ENCODE measurements at regions of chr7 and their contacts with region 1.

Region 1: DNA sequence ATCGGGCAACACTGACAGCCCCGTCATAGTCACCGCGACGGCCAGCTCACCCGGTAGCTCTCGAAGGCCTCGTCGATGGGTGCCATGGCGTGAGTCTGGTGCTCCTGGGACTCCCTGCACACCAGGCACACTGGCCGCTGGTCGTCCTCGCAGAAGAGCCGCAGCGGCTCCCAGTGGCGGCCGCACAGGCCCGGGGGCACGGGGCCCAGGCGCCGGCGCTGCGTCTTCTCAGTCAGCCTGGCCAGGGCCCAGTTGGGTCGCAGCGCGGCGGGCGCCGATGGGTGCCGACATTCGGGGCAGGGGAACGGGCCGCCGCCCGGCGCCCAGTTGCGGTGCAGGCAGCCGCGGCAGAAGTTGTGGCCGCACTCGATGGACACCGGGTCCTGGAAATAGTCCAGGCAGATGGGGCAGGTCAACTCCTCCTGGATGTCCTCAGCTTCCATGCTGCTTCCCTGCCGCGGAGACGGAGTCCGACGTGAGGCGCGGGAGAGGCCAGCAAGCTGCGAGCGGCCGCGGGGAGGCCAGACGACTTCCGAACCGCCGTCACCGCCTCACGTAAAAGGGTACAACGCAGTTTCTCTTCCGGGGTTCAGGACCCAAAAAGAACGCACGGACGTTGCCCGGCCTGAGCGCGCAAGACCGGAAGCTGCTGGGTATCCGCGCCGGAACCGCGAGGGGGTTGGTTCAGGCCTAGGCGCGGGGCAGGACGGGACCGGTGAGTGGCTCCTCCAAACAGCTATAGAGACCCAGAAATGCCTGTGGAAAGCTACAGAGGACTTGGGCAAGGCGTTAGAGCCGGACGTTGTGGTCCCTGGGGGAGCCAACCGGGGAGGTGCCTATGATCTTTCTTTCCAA is at the start of gene TRIM4:
- DNase-seq: peak; percentile 96
- ATAC-seq: peak; percentile 99
- H3K4me3 Mint-ChIP-seq: peak within 1 kb of the TSS; percentile 92
- H3K27ac Mint-ChIP-seq: peak within 1 kb of the TSS; percentile 95
- H3K4me1 Mint-ChIP-seq: peaks cover 33% of the 10 kb centered on the region
- H3K27me3 Mint-ChIP-seq: no peaks in the 10 kb centered on the region
- total RNA-seq, gene TRIM4: 23.9 to 25.7 TPM

Region 2: DNA sequence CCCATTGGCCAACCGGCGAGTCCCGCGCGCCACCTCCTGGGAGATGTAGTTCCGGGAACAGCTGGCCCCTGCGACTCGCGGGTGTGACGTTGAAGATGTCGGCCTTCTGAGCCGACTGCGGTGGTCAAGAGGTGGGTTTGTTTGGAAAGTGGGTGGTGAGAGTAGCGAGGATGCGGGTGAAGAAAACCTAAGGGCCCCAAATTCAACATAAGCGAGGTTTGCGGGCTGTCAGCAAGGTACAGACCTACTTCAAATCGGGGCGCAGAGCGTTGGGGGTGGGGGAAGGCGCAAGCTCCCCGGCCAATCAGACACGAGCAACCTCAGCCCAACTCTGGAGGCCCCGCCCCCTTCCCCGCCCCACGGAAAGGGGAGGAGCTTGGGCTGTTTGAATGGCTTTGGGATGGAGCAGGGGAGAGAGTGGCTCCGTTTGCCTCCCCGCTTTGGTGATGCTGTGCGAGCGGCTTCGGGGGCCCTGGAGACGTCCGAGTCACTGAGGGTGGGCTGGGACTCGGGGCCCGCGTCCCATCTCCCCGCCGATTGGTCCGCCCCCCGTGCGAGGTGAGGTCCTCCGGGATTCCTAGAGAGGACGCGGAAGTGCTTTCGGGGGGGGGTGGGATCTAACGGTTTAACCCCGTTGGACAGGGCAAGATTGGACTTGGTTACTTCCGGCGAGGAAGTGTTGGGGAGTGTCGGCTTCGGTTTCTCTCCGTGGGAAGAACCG is 414.4 kb before region 1 on chr7 and contains the start of gene ZKSCAN5:
- CTCF ChIA-PET with region 1: interaction called, 5 read pairs
- POLR2A ChIA-PET with region 1: no interaction called
- intact Hi-C with region 1: loop called in 1 of 2 experiments (anchors 1 kb)
- DNase-seq: peak; percentile 99
- ATAC-seq: peak; percentile 87
- H3K4me3 Mint-ChIP-seq: peak within 1 kb of the TSS; percentile 87
- H3K27ac Mint-ChIP-seq: peak within 1 kb of the TSS; percentile 97
- H3K4me1 Mint-ChIP-seq: peaks cover 25% of the 10 kb centered on the region
- H3K27me3 Mint-ChIP-seq: no peaks in the 10 kb centered on the region
- total RNA-seq, gene ZKSCAN5: 10.1 to 12.1 TPM

Region 3: DNA sequence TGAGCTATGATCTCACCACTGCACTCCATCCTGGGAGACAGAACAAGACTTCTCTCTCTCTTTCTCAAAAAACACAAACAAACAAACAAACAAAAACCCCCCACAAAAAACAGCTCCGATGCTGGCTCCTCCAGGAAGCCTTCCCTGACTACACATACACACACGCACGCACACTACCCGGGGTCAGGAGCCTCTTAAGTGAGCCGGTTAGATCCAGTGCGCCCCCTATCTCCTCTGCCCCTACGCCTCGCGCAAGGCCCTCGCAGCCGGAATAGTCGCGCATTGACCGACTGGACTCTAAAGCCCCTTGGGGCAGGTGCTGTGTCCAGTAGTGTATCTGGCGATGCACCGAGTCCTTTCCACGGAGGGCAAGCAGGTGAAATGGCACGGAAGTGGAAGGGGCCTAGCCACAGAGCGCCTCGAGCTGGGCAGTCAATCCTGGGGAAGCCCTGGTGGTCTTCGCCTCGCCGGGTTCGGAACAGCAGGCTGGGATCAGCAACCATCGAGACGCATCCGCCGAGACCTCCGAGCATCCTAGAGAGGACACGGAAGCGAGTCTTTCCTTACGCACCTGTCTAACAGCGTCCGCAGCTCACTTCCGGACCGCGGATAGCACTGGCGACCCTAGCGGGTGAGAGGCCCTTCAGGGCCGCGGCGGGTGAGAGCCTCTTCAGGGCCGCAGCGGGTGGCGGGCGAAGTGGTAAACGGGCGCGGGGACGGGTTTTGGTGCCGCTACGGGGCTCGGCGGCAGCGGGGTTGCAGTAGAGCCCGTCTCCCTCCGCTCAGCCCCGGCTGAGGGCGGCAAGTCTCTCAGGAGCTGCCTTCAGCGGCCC is 302.6 kb before region 1 on chr7 and contains the start of gene ZSCAN25:
- CTCF ChIA-PET with region 1: no interaction called
- POLR2A ChIA-PET with region 1: no interaction called
- intact Hi-C with region 1: loop called in 1 of 2 experiments (anchors 1 kb)
- DNase-seq: peak; percentile 92
- ATAC-seq: peak; percentile 93
- H3K4me3 Mint-ChIP-seq: peak within 1 kb of the TSS; percentile 92
- H3K27ac Mint-ChIP-seq: peak within 1 kb of the TSS; percentile 96
- H3K4me1 Mint-ChIP-seq: peaks cover 44% of the 10 kb centered on the region
- H3K27me3 Mint-ChIP-seq: no peaks in the 10 kb centered on the region
- total RNA-seq, gene ZSCAN25: 20.5 to 25.2 TPM

Region 4: GRCh38 chr7:99827040-99827778 is 92.0 kb before region 1 on chr7:
- CTCF ChIA-PET with region 1: no interaction called
- POLR2A ChIA-PET with region 1: no interaction called
- intact Hi-C with region 1: no loop called
- DNase-seq: no peak
- ATAC-seq: no peak
- H3K4me3 Mint-ChIP-seq: no peak overlapping the region
- H3K27ac Mint-ChIP-seq: no peak overlapping the region
- H3K4me1 Mint-ChIP-seq: no peaks in the 10 kb centered on the region
- H3K27me3 Mint-ChIP-seq: peaks cover 3% of the 10 kb centered on the region

Region 5: DNA sequence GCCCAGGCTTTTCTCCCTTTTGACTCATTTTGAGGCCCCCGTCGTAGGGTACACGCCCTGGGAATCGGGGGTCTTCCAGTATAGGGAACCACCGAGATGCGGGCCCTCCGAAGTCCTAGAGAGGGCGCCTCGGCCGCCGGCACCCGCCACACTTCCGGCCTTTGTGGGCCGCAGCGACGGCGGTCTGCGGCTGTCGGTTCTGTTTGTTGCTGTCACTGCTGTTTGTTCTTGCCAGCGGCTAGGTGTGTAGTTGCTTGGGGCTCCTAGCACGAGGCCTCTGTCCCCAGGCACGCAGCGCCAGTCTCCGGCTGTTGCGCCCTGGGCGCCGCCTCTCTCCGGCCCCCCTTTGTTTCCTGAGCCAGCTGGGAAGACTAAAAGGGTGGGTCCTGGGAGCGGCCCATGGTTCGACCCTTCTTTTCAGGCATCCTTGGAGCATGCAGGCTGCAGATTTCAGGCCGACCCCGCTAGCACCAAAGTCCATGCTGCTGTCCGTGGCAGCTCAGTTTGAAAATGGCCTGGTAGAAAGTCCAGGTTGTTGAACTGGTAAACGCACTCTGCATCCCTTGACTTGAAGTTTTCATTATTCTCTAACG is 78.5 kb after region 1 on chr7:
- CTCF ChIA-PET with region 1: interaction called, 50 read pairs
- POLR2A ChIA-PET with region 1: interaction called, 4 read pairs
- intact Hi-C with region 1: no loop called
- DNase-seq: peak; percentile 81
- ATAC-seq: peak; percentile 87
- H3K4me3 Mint-ChIP-seq: peak overlapping the region; percentile 67
- H3K27ac Mint-ChIP-seq: peak overlapping the region; percentile 89
- H3K4me1 Mint-ChIP-seq: peaks cover 15% of the 10 kb centered on the region
- H3K27me3 Mint-ChIP-seq: peaks cover 1% of the 10 kb centered on the region

Region 6: GRCh38 chr7:100088621-100089457 is 169.7 kb after region 1 on chr7 and contains the start of gene COPS6:
- CTCF ChIA-PET with region 1: no interaction called
- POLR2A ChIA-PET with region 1: no interaction called
- intact Hi-C with region 1: loop called (anchors 2 to 10 kb)
- DNase-seq: peak; percentile 92
- ATAC-seq: peak; percentile 67
- H3K4me3 Mint-ChIP-seq: peak within 1 kb of the TSS; percentile 89
- H3K27ac Mint-ChIP-seq: peak within 1 kb of the TSS; percentile 96
- H3K4me1 Mint-ChIP-seq: peaks cover 25% of the 10 kb centered on the region
- H3K27me3 Mint-ChIP-seq: no peaks in the 10 kb centered on the region
- total RNA-seq, gene COPS6: 88.6 to 89.0 TPM

Region 7: GRCh38 chr7:100132697-100133151 is 213.5 kb after region 1 on chr7:
- CTCF ChIA-PET with region 1: interaction called, 11 read pairs
- POLR2A ChIA-PET with region 1: no interaction called
- intact Hi-C with region 1: loop called (anchors 1 to 5 kb)
- DNase-seq: peak; percentile 82
- ATAC-seq: peak; percentile 81
- H3K4me3 Mint-ChIP-seq: no peak overlapping the region
- H3K27ac Mint-ChIP-seq: no peak overlapping the region
- H3K4me1 Mint-ChIP-seq: peaks cover 10% of the 10 kb centered on the region
- H3K27me3 Mint-ChIP-seq: no peaks in the 10 kb centered on the region